GM12878 (cell line): ENCODE measurements at regions of chr12 and their contacts with region 1.

Region 1: GRCh38 chr12:106282457-106283097 is 20.0 kb upstream of the TCP11L2 start:
- DNase-seq: no peak
- ATAC-seq: peak; percentile 86
- H3K4me3 ChIP-seq: no peak overlapping the region
- H3K27ac ChIP-seq: no peak overlapping the region
- H3K4me1 ChIP-seq: no peaks in the 10 kb centered on the region
- H3K27me3 ChIP-seq: no peaks in the 10 kb centered on the region; a peak in 1 of 4 replicates
- CTCF ChIP-seq: peak; percentile 69 to 74 (median 74); a peak in 5 of 6 replicates
- EP300 ChIP-seq: no peak
- POLR2A ChIP-seq: no peak
- RAD21 ChIP-seq: peak; percentile 76

Region 2: DNA sequence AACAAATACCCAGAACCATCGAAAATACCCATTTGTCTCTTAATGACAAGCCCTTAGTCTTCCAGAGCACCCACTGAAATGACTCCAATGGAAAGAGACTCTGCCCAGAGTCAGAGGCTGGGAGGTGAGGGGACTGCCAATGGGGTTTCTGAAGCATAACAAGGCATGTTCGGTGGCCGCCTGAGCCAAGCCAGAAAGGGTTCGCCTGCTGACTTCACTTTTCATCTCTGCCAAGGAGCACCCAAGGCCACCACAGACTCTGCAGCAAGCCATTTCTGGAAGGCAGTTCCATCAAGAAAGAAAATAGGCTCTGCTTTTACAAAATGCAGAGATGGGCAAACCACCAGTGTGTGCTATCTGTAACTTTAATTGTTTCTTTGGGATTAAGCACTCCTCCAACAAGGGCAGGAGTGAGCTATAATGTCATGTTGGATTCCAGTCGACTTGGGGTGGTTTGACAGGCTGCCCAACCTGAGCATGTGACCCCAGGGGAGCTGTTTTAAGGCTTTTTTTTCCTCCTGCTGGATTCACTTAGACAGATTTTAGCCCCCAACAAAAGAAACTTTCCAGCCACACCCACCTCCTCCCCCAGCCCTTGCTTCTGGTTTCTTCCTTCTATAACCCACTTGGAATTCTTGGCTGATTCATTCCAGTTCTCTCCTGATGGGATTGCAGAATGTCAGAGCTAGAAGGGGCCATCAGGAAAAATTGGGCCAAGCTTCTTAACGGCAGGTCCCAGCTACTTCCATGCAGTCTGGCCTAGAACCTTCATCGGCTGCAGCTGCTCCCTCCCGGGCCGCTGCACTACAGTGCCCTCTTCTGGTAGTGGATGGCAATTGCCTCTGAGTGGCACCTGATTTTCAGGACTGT is 58.9 kb before region 1 on chr12:
- CTCF ChIA-PET with region 1: interaction called, 206 read pairs
- POLR2A ChIA-PET with region 1: no interaction called
- RAD21 ChIA-PET with region 1: interaction called, 44 read pairs
- SMC1A ChIA-PET with region 1: interaction called, 57 read pairs
- in situ Hi-C with region 1: loop called (anchors 5 kb)
- intact Hi-C with region 1: loop called (anchors 1 kb)
- DNase-seq: no peak
- ATAC-seq: peak; percentile 94
- H3K4me3 ChIP-seq: no peak overlapping the region
- H3K27ac ChIP-seq: no peak overlapping the region
- H3K4me1 ChIP-seq: no peaks in the 10 kb centered on the region
- H3K27me3 ChIP-seq: no peaks in the 10 kb centered on the region
- CTCF ChIP-seq: peak; percentile 84 to 98 (median 95)
- EP300 ChIP-seq: no peak
- POLR2A ChIP-seq: no peak
- RAD21 ChIP-seq: peak; percentile 59

Region 3: GRCh38 chr12:106247674-106248311 is 34.8 kb before region 1 on chr12 and contains the start of gene CKAP4:
- CTCF ChIA-PET with region 1: interaction called, 4 read pairs
- POLR2A ChIA-PET with region 1: no interaction called
- RAD21 ChIA-PET with region 1: no interaction called
- SMC1A ChIA-PET with region 1: interaction called, 7 read pairs
- in situ Hi-C with region 1: no loop called
- intact Hi-C with region 1: loop called (anchors 5 kb)
- DNase-seq: no peak
- ATAC-seq: peak; percentile 60
- H3K4me3 ChIP-seq: peak within 1 kb of the TSS; percentile 95
- H3K27ac ChIP-seq: peak within 1 kb of the TSS; percentile 87
- H3K4me1 ChIP-seq: peaks cover 21% of the 10 kb centered on the region
- H3K27me3 ChIP-seq: peaks cover 0 to 4% of the 10 kb centered on the region in 2 experiments; a peak in 1 of 4 replicates
- CTCF ChIP-seq: no peak
- EP300 ChIP-seq: no peak
- POLR2A ChIP-seq: peak; percentile 60
- RAD21 ChIP-seq: no peak
- polyA plus RNA-seq, gene CKAP4: 5.9 to 11.1 TPM

Region 4: DNA sequence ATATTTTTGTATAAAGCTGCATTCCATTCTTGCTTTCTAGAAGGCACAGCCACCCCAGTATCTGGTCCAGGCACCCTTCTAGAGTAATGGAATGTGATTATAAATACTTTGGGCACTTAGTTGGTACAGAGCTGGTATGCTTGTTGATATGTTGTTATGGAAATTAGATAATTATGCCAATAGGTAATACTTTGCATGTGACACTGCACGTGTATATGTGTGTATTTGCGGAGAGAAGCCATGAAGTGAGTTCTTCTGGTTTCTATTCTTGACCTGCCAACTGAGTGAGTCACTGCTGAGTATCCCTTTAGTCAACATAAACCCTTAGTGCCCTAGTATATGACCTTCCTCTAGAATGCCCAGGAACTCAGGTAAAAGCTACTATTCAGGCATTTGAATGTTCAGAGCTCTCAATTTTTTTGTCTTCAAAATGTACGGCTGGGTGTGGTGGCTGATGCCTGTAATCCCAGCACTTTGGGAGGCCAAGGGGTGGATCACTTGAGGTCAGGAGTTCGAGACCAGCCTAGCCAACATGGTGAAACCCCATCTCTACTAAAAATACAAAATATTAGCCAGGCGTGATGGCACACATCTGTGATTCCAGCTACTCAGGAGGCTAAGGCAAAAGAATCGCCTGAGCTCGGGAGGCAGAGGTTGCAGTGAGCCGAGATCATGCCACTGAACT is 13.8 kb after region 1 on chr12:
- CTCF ChIA-PET with region 1: interaction called, 17 read pairs
- POLR2A ChIA-PET with region 1: interaction called, 3 read pairs
- RAD21 ChIA-PET with region 1: interaction called, 6 read pairs
- SMC1A ChIA-PET with region 1: interaction called, 9 read pairs
- in situ Hi-C with region 1: no loop called
- intact Hi-C with region 1: no loop called
- DNase-seq: no peak
- ATAC-seq: no peak
- H3K4me3 ChIP-seq: no peak overlapping the region
- H3K27ac ChIP-seq: no peak overlapping the region
- H3K4me1 ChIP-seq: peaks cover under 1% of the 10 kb centered on the region; the same call in 1 of the 2 replicates
- H3K27me3 ChIP-seq: no peaks in the 10 kb centered on the region
- CTCF ChIP-seq: no peak
- EP300 ChIP-seq: no peak
- POLR2A ChIP-seq: no peak
- RAD21 ChIP-seq: no peak